ENCODE measurements at regions of chr2 and their contacts with region 1.

Region 1: DNA sequence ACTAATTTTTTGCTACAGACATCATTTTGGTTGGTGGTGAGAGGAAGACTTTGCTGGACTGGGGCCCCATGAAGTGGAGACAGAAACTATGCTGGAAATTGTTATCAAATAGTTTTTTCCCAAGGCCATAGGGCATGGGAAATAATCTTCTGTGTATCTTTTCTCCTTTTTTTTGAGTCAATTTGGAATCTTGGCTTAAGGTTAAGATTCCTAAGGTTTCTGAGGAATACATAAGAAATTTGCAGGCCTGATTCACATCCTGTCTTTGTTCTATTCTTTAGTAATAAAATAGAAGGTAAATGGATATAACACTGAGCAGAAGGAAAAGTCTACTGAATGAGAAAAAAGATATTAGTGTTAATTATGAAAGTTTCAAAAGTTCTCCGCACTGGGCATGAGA is 16.6 kb downstream of the SMC6 start:
- DNase-seq: no peak
- ATAC-seq: no peak
- H3K4me3 ChIP-seq: no peak overlapping the region
- H3K27ac ChIP-seq: no peak overlapping the region
- H3K4me1 ChIP-seq: no peaks in the 10 kb centered on the region
- H3K27me3 ChIP-seq: no peaks in the 10 kb centered on the region
- CTCF ChIP-seq: no peak

Region 2: GRCh38 chr2:17706845-17707244 is 30.1 kb before region 1 on chr2:
- intact Hi-C with region 1: loop called in 1 of 2 experiments (anchors 5 kb)
- DNase-seq: no peak
- ATAC-seq: no peak
- H3K4me3 ChIP-seq: no peak overlapping the region
- H3K27ac ChIP-seq: no peak overlapping the region
- H3K4me1 ChIP-seq: no peaks in the 10 kb centered on the region
- H3K27me3 ChIP-seq: no peaks in the 10 kb centered on the region
- CTCF ChIP-seq: no peak

Region 3: GRCh38 chr2:17780546-17780945 is 43.6 kb after region 1 on chr2:
- intact Hi-C with region 1: no loop called
- DNase-seq: no peak
- ATAC-seq: no peak
- H3K4me3 ChIP-seq: no peak overlapping the region
- H3K27ac ChIP-seq: no peak overlapping the region
- H3K4me1 ChIP-seq: no peaks in the 10 kb centered on the region
- H3K27me3 ChIP-seq: no peaks in the 10 kb centered on the region
- CTCF ChIP-seq: no peak

Measured in psoas muscle (tissue), 8 donors.